ENCODE measurements at regions of chr9 and their contacts with region 1.

Region 1: GRCh38 chr9:68999393-69000105 is 14.4 kb downstream of the PRKACG start:
- DNase-seq: peak in 1 of 3 donors; percentile 66
- ATAC-seq: peak; percentile 90 to 98 (median 95)
- H3K4me3 ChIP-seq: no peak overlapping the region
- H3K27ac ChIP-seq: no peak overlapping the region
- H3K4me1 ChIP-seq: no peaks in the 10 kb centered on the region
- H3K27me3 ChIP-seq: no peaks in the 10 kb centered on the region
- CTCF ChIP-seq: peak; percentile 73 to 85 (median 82)
- POLR2A ChIP-seq: no peak

Region 2: DNA sequence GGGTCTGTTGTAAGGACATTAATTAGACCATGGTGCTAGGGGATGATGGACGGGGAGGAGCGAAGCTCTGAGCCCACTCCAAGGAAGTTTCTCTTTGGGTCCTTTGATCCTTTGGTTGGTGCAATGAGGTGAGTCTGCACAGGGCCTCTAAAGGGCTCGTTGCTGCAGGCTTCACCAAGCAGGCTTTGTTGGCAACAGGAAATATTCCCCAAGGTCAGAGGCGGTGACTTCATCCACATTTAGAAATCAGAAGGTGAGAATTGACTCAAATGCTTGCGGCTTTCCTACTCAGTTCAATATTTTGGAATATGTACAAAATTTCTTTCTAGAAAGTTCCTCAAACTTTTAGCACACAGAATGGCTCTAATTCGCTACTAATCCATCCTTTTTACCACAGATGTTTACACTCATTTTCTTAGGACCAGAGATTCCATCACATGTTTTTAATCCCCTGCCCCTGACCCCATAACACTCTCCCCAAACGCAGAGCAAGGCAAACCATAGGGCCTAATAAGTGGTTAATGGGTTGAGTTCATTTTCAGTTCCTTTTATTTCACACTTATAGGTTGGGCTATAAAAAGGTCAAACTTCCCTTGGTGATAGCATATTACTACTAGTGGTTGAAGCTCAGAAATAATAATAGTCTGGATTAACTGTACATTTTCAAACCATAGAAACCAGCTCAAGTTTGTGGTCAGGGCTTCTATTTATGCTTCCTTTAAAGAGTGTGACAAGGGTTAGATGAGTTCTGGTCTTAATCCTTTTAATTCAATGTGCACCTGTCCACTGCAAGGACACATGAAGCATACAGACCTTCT is 421.6 kb before region 1 on chr9:
- intact Hi-C with region 1: loop called in 1 of 2 experiments (anchors 10 kb)
- DNase-seq: no peak
- ATAC-seq: no peak
- H3K4me3 ChIP-seq: no peak overlapping the region
- H3K27ac ChIP-seq: no peak overlapping the region
- H3K4me1 ChIP-seq: no peaks in the 10 kb centered on the region
- H3K27me3 ChIP-seq: no peaks in the 10 kb centered on the region
- CTCF ChIP-seq: no peak
- POLR2A ChIP-seq: no peak

Region 3: DNA sequence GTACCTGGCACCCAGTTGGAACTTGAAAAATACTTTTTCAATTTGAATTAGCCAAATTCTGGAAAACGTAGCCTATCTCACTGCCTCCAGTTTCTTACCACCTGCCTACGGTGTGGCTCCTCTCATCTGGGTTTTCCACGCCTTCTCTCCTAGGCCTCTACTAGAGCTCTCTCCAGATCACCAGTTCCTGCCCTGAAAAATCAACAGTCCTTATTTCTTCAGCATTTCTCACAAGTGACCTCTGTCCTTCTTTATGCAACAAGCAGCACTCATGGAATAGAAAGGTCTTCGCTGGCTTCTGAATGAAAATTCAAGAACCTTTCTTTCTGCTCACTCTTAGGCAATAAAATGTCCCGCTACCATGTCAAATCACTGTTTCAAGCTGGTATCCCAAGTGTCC is 229.7 kb before region 1 on chr9:
- intact Hi-C with region 1: no loop called
- DNase-seq: no peak
- ATAC-seq: no peak
- H3K4me3 ChIP-seq: no peak overlapping the region
- H3K27ac ChIP-seq: no peak overlapping the region
- H3K4me1 ChIP-seq: no peaks in the 10 kb centered on the region
- H3K27me3 ChIP-seq: no peaks in the 10 kb centered on the region
- CTCF ChIP-seq: no peak
- POLR2A ChIP-seq: no peak

Region 4: DNA sequence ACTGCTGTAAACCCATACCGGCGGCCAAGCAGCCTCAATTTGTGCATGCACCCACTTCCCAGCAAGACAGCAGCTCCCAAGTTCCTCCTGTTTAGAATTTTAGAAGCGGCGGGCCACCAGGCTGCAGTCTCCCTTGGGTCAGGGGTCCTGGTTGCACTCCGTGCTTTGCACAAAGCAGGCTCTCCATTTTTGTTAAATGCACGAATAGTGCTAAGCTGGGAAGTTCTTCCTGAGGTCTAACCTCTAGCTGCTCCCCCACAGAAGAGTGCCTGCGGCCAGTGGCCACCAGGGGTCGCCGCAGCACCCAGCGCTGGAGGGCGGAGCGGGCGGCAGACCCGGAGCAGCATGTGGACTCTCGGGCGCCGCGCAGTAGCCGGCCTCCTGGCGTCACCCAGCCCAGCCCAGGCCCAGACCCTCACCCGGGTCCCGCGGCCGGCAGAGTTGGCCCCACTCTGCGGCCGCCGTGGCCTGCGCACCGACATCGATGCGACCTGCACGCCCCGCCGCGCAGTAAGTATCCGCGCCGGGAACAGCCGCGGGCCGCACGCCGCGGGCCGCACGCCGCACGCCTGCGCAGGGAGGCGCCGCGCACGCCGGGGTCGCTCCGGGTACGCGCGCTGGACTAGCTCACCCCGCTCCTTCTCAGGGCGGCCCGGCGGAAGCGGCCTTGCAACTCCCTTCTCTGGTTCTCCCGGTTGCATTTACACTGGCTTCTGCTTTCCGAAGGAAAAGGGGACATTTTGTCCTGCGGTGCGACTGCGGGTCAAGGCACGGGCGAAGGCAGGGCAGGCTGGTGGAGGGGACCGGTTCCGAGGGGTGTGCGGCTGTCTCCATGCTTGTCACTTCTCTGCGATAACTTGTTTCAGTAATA is 36.1 kb after region 1 on chr9 and contains the start of gene FXN:
- intact Hi-C with region 1: no loop called
- DNase-seq: peak; percentile 87 to 90 (median 88)
- ATAC-seq: peak; percentile 85 to 95 (median 93)
- H3K4me3 ChIP-seq: peak within 1 kb of the TSS; percentile 79 to 89 (median 79)
- H3K27ac ChIP-seq: peak within 1 kb of the TSS; percentile 77 to 89 (median 81)
- H3K4me1 ChIP-seq: peaks cover 0 to 9% (median 2%) of the 10 kb centered on the region in 4 donors
- H3K27me3 ChIP-seq: no peaks in the 10 kb centered on the region
- CTCF ChIP-seq: peak in 3 of 4 donors; percentile 97 to 100 (median 99)
- POLR2A ChIP-seq: peak; percentile 77
- total RNA-seq, gene FXN: 12.5 to 30.4 (median 24.7) TPM

Region 5: GRCh38 chr9:69324549-69325401 is 325.2 kb after region 1 on chr9 and contains the start of gene ENTREP1:
- intact Hi-C with region 1: no loop called
- DNase-seq: peak; percentile 55 to 67 (median 65)
- ATAC-seq: peak; percentile 92 to 97 (median 94)
- H3K4me3 ChIP-seq: peak within 1 kb of the TSS; percentile 32 to 48 (median 38)
- H3K27ac ChIP-seq: no peak within 1 kb of the TSS
- H3K4me1 ChIP-seq: peaks cover 0 to 7% (median 0%) of the 10 kb centered on the region in 4 donors
- H3K27me3 ChIP-seq: peaks cover 0 to 9% of the 10 kb centered on the region in 2 donors
- CTCF ChIP-seq: no peak
- POLR2A ChIP-seq: no peak
- total RNA-seq, gene ENTREP1: 0.12 to 0.42 (median 0.30) TPM

Measured in right lobe of liver (tissue), 6 donors.